Calu3 (cell line): ENCODE measurements at regions of chr1 and their contacts with region 1.

Region 1: GRCh38 chr1:218874313-218874712 is 299.4 kb upstream of the LYPLAL1 start:
- DNase-seq: peak; percentile 52
- H3K4me3 Mint-ChIP-seq: peak overlapping the region; percentile 47
- H3K27ac Mint-ChIP-seq: peak overlapping the region; percentile 68
- H3K4me1 Mint-ChIP-seq: peaks cover 59% of the 10 kb centered on the region
- H3K27me3 Mint-ChIP-seq: no peaks in the 10 kb centered on the region
- CTCF ChIP-seq: no peak

Region 2: DNA sequence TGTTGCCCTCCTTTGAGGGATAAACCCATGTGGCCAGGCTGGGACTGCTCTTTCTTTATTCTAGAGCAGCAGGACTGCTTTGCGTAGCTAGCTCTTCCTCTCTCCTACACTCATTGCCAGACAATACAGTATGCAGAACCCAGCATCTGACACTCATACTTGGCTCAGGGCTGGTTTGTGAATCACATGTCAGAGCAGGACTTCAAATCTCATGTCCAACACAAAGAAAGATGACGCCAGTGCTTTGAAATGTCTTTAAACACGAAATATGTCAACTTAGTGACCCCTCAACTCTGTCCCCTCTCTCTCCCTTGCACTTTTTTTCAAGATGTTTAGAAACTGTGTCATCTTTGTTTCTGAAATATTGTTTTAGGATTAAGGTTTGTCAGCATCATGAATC is 394.2 kb before region 1 on chr1:
- CTCF ChIA-PET with region 1: no interaction called
- intact Hi-C with region 1: loop called (anchors 10 kb)
- DNase-seq: no peak
- H3K4me3 Mint-ChIP-seq: no peak overlapping the region
- H3K27ac Mint-ChIP-seq: peak overlapping the region; percentile 79
- H3K4me1 Mint-ChIP-seq: peaks cover 59% of the 10 kb centered on the region
- H3K27me3 Mint-ChIP-seq: no peaks in the 10 kb centered on the region
- CTCF ChIP-seq: no peak

Region 3: GRCh38 chr1:218760601-218761570 is 113.4 kb before region 1 on chr1:
- CTCF ChIA-PET with region 1: no interaction called
- intact Hi-C with region 1: loop called (anchors 5 kb)
- DNase-seq: no peak
- H3K4me3 Mint-ChIP-seq: no peak overlapping the region
- H3K27ac Mint-ChIP-seq: peak overlapping the region; percentile 83
- H3K4me1 Mint-ChIP-seq: peaks cover 67% of the 10 kb centered on the region
- H3K27me3 Mint-ChIP-seq: no peaks in the 10 kb centered on the region
- CTCF ChIP-seq: no peak

Region 4: DNA sequence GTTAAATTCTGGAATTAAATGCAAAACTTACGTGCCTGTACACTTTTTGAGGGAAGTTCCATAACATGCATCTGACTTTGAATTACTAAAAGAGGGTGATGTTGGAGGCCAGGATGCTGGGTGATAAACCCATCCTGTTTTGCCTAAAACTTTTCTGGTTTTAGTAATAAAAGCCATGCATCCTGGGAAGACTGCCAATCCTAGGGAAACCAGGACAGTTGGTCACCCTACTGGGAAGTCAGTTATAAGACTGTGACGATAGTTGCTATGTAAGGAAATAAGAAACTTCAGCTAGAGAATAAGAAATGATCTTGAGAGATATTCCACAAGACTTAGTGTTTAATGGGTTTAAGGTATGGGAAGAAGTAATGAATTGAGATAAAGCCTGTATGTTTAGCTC is 37.3 kb before region 1 on chr1:
- CTCF ChIA-PET with region 1: no interaction called
- intact Hi-C with region 1: no loop called
- DNase-seq: no peak
- H3K4me3 Mint-ChIP-seq: no peak overlapping the region
- H3K27ac Mint-ChIP-seq: no peak overlapping the region
- H3K4me1 Mint-ChIP-seq: peaks cover 9% of the 10 kb centered on the region
- H3K27me3 Mint-ChIP-seq: no peaks in the 10 kb centered on the region
- CTCF ChIP-seq: no peak

Region 5: GRCh38 chr1:218851586-218851985 is 22.7 kb before region 1 on chr1:
- CTCF ChIA-PET with region 1: no interaction called
- intact Hi-C with region 1: no loop called
- DNase-seq: no peak
- H3K4me3 Mint-ChIP-seq: no peak overlapping the region
- H3K27ac Mint-ChIP-seq: no peak overlapping the region
- H3K4me1 Mint-ChIP-seq: peaks cover 14% of the 10 kb centered on the region
- H3K27me3 Mint-ChIP-seq: no peaks in the 10 kb centered on the region
- CTCF ChIP-seq: no peak

Region 6: GRCh38 chr1:218945050-218945449 is 70.7 kb after region 1 on chr1:
- CTCF ChIA-PET with region 1: interaction called, 3 read pairs
- intact Hi-C with region 1: loop called (anchors 2 kb)
- DNase-seq: no peak
- H3K4me3 Mint-ChIP-seq: no peak overlapping the region
- H3K27ac Mint-ChIP-seq: peak overlapping the region; percentile 66
- H3K4me1 Mint-ChIP-seq: peaks cover 51% of the 10 kb centered on the region
- H3K27me3 Mint-ChIP-seq: no peaks in the 10 kb centered on the region
- CTCF ChIP-seq: no peak

Region 7: DNA sequence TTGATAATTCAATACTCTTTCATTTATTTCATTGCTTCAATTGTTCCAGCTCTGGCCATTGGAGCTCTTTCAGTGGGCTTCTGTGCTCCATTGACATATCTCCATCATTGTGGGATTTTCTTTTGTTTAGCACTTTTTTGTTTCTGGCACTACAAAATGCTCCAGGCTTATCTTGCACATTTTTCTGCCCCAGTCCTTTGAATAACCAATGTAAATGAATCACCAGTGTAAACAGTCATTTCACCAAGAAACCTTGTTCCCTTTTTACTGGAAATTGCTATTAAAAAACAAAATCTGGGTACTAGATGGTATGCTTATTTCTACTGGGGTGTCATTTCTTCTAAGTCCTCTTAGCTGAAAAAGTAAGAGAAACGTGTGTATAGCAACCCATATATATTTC is 126.3 kb after region 1 on chr1:
- CTCF ChIA-PET with region 1: no interaction called
- intact Hi-C with region 1: no loop called
- DNase-seq: no peak
- H3K4me3 Mint-ChIP-seq: no peak overlapping the region
- H3K27ac Mint-ChIP-seq: no peak overlapping the region
- H3K4me1 Mint-ChIP-seq: peaks cover 21% of the 10 kb centered on the region
- H3K27me3 Mint-ChIP-seq: no peaks in the 10 kb centered on the region
- CTCF ChIP-seq: no peak